ENCODE measurements at regions of chr1 and their contacts with region 1.

Region 1: GRCh38 chr1:228500901-228501871 is 14.0 kb downstream of the RNF187 start:
- DNase-seq: peak; percentile 95
- ATAC-seq: peak; percentile 97
- H3K4me3 Mint-ChIP-seq: peak overlapping the region; percentile 44
- H3K27ac Mint-ChIP-seq: peak overlapping the region; percentile 45
- H3K4me1 Mint-ChIP-seq: peaks cover 45% of the 10 kb centered on the region
- H3K27me3 Mint-ChIP-seq: peaks cover 5% of the 10 kb centered on the region

Region 2: GRCh38 chr1:228405987-228406265 is 95.3 kb before region 1 on chr1:
- CTCF ChIA-PET with region 1: interaction called, 15 read pairs
- DNase-seq: peak; percentile 52
- ATAC-seq: peak; percentile 14
- H3K4me3 Mint-ChIP-seq: peak overlapping the region; percentile 98
- H3K27ac Mint-ChIP-seq: peak overlapping the region; percentile 83
- H3K4me1 Mint-ChIP-seq: peaks cover 52% of the 10 kb centered on the region
- H3K27me3 Mint-ChIP-seq: no peaks in the 10 kb centered on the region

Region 3: DNA sequence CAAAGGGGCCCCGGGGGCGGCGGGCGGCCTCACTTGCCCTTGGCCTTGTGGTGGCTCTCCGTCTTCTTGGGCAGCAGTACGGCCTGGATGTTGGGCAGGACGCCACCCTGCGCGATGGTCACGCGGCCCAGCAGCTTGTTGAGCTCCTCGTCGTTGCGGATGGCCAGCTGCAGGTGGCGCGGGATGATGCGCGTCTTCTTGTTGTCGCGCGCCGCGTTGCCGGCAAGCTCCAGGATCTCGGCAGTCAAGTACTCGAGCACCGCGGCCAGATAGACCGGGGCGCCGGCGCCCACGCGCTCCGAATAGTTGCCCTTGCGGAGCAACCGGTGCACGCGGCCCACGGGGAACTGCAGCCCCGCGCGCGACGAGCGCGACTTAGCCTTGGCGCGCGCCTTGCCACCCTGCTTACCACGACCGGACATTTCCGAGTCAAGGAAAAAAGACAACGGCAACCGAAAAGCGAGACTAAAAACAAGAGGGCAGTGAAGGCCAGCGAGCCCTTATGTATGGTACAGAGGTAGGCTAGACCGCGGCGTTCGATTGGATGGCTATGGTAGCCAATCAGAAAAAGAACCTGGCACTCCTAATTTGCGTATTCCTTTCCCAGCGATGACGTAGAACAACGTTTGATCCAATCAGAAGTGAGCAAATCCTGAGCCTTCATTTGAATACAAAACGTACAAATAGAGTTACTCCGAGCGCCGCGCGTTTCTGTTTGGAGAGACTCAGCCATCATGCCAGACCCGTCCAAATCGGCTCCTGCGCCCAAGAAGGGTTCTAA is 43.6 kb before region 1 on chr1:
- CTCF ChIA-PET with region 1: interaction called, 26 read pairs
- DNase-seq: peak; percentile 95
- ATAC-seq: peak; percentile 83
- H3K4me3 Mint-ChIP-seq: peak overlapping the region; percentile 96
- H3K27ac Mint-ChIP-seq: peak overlapping the region; percentile 99
- H3K4me1 Mint-ChIP-seq: peaks cover 56% of the 10 kb centered on the region
- H3K27me3 Mint-ChIP-seq: no peaks in the 10 kb centered on the region

Region 4: DNA sequence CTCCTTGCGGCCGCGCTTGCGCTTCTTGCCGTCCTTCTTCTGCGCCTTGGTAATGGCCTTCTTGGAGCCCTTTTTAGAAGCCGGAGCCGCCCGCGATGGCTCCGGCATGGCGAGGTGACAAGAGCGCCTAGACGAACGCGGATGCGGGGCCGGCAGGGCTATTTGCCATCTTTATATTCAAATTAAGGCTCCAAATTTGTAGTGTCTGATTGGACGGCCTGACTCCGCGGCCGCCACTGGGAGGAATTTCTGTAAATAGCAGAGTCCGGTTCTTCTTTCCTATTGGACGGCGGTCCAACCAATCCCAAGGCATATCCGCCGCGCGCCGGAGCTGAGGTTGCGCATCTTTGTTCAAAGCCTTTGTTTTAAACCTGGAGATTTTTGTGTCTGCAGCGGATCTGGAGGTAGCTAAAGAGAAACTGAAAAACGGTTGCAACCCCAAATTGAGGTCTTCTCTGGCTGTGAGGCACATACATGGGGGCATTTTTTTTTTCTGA is 36.7 kb before region 1 on chr1:
- CTCF ChIA-PET with region 1: interaction called, 26 read pairs
- DNase-seq: peak; percentile 97
- ATAC-seq: peak; percentile 77
- H3K4me3 Mint-ChIP-seq: peak overlapping the region; percentile 94
- H3K27ac Mint-ChIP-seq: peak overlapping the region; percentile 96
- H3K4me1 Mint-ChIP-seq: peaks cover 74% of the 10 kb centered on the region
- H3K27me3 Mint-ChIP-seq: no peaks in the 10 kb centered on the region

Region 5: DNA sequence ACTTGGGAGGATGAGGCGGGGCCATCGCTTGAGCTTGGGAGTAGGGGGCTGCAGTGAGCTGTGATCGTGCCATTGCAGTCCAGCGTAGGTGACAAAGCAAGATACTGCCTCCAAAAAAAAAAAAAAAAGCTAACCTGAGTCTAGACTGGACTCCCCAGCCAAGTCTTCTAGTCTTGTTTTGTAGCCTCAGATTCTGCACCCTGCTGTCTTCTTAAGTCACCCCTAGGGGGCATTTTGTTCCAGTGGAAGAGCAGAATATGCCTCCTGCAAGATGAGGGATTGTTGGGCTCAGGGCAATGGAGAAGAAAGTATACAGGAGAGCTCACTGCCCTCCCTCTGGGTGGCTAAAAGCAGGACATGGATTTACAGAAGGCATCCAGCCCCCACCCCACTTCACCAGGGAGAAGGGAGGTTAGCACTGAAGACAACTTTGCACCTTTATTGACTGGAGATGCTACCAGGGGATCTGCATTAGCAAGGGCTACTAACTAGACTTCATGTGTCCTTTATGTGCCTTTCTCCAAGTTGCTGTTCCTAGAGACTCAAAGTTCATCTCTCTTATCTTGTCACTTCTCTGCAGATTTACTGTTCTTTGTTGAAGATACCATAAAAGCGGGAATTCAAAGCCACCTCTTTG is 29.3 kb before region 1 on chr1:
- CTCF ChIA-PET with region 1: interaction called, 43 read pairs
- DNase-seq: peak; percentile 62
- ATAC-seq: peak; percentile 87
- H3K4me3 Mint-ChIP-seq: no peak overlapping the region
- H3K27ac Mint-ChIP-seq: peak overlapping the region; percentile 86
- H3K4me1 Mint-ChIP-seq: peaks cover 54% of the 10 kb centered on the region
- H3K27me3 Mint-ChIP-seq: peaks cover 4% of the 10 kb centered on the region

Region 6: DNA sequence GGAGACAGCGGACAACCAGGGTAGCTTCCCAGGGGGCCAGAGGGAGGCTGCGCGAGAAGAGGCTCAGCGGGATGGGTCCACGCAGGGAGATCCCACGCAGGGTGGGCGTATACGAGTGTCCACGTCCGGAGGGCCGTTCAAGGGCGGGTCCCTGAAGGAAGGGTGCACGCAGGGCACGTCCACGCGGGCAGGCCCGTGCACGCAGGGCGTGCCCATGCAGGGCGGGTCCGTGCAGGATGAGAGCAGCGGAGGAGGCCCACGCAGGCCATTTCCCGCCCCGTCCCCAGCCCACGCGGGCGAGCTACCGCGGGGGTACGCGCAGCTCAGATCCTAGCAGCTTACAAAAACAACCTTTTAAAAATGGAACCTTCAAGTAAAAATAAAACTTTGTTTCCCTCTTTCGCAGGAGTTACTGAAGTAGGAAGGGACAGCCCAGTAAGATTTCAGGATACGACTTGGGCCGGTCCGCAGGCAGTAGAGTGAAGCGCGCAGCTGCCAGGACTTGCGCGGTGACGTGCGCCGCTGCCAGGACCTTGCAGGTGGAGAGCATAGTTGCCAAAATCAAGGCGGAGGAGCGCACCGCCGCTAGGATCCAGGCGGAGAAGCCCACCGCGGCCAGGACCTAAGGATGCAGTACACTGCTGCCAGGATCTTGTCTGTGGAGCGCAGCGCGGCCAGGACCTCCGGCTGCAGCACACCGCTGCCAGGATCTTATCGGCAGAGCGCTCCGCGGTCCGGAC is 14.4 kb before region 1 on chr1:
- CTCF ChIA-PET with region 1: interaction called, 29 read pairs
- DNase-seq: peak; percentile 89
- ATAC-seq: peak; percentile 70
- H3K4me3 Mint-ChIP-seq: peak overlapping the region; percentile 97
- H3K27ac Mint-ChIP-seq: peak overlapping the region; percentile 98
- H3K4me1 Mint-ChIP-seq: peaks cover 64% of the 10 kb centered on the region
- H3K27me3 Mint-ChIP-seq: no peaks in the 10 kb centered on the region

Region 7: GRCh38 chr1:228515200-228515834 is 14.1 kb after region 1 on chr1:
- CTCF ChIA-PET with region 1: interaction called, 40 read pairs
- DNase-seq: peak; percentile 53
- ATAC-seq: peak; percentile 51
- H3K4me3 Mint-ChIP-seq: no peak overlapping the region
- H3K27ac Mint-ChIP-seq: no peak overlapping the region
- H3K4me1 Mint-ChIP-seq: peaks cover 22% of the 10 kb centered on the region
- H3K27me3 Mint-ChIP-seq: peaks cover 57% of the 10 kb centered on the region

Region 8: GRCh38 chr1:228527596-228527995 is 26.4 kb after region 1 on chr1:
- CTCF ChIA-PET with region 1: no interaction called
- DNase-seq: no peak
- ATAC-seq: no peak
- H3K4me3 Mint-ChIP-seq: no peak overlapping the region
- H3K27ac Mint-ChIP-seq: no peak overlapping the region
- H3K4me1 Mint-ChIP-seq: no peaks in the 10 kb centered on the region
- H3K27me3 Mint-ChIP-seq: peaks cover 14% of the 10 kb centered on the region